ENCODE measurements at regions of chr1 and their contacts with region 1.

Region 1: GRCh38 chr1:21012937-21013336 is 163.8 kb downstream of the EIF4G3 start:
- DNase-seq: no peak
- ATAC-seq: peak; percentile 90

Region 2: DNA sequence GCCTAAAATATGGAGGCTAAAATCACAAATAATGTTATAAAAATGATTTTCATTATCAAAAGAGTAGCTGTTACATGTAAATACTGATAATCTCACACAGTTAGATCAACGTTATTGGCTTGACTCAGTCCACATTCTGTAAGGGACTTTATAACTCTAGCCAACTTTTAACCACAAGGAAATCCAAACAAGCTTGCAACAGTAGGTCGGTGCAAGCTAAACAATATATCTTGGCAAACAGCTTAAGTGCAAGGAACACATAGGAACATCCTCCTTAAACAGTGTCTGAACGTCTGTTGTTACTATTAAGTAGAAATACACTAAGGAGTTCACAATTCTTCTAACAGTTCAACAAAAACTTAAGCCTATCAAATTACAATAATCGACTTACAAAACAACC is 37.1 kb after region 1 on chr1:
- intact Hi-C with region 1: no loop called
- DNase-seq: no peak
- ATAC-seq: no peak

Region 3: GRCh38 chr1:21117597-21118001 is 104.7 kb after region 1 on chr1:
- intact Hi-C with region 1: loop called (anchors 10 kb)
- DNase-seq: no peak
- ATAC-seq: peak; percentile 81

Measured in Right ventricle myocardium inferior (tissue), 1 donor.